Activated naive CD4-positive, alpha-beta T cell treated with anti-CD3 and anti-CD28 coated beads for 36 hours (primary cell): ENCODE measurements at regions of chr6 and their contacts with region 1.

Region 1: DNA sequence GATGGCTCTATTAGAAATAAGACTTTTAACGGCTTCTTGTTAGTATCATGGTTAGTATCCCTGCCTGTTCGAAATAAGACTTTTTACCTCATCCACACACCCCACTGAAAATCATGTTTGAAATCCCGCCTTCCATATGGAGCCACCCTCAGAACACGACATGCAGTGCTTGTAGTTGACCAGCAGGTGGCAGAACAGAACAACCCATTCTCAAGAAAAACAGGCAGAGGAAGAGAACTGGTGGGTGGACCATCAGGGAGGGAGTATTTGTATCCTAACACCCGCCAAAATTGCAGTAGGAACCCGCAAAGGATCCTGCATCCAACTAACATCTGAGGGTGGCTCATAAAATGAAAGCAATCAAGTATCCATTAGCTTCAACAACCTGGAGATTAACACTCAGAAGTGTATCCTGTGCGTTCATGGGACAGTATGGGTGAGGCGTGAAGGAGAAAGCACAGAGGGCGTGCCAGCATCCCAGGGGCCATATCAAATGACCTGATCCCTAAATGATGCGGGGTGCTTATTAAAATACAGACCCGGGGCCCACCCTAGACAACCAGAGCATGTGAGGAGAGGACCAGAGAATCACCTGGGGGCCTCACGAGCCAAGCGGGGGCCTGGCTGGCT is 89.6 kb upstream of the NHSL1 start:
- DNase-seq: peak; percentile 73
- H3K4me3 Mint-ChIP-seq: no peak overlapping the region
- H3K27ac Mint-ChIP-seq: no peak overlapping the region
- H3K4me1 Mint-ChIP-seq: peaks cover 29% of the 10 kb centered on the region
- H3K27me3 Mint-ChIP-seq: no peaks in the 10 kb centered on the region

Region 2: DNA sequence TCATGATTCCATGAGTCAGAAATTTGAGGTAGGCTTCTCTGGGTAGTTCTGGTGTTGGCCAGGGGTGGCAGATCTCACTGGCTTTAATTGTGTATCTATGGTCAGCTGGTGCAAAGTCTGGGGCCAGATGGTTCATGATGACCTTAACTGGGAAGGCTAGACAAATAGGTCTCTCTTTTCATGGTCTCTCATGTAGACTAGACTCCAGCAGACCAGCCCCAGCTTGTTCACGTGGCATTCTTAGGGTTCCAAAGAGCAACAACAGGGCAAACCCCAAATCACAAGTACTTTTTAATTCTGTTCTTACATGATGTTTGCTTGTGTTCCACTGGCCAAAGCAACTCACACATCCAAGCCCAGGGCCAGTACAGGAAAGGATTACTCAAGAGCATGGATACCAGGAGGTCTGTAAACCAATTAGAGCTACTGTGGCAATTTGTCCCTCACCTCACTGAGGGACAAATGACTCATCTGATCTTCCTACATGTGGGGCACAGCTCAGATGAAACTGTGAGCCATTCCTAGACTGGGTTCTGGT is 291.1 kb before region 1 on chr6:
- CTCF ChIA-PET with region 1: no interaction called
- intact Hi-C with region 1: no loop called
- DNase-seq: peak; percentile 8
- H3K4me3 Mint-ChIP-seq: no peak overlapping the region
- H3K27ac Mint-ChIP-seq: no peak overlapping the region
- H3K4me1 Mint-ChIP-seq: peaks cover 6% of the 10 kb centered on the region
- H3K27me3 Mint-ChIP-seq: peaks cover 6% of the 10 kb centered on the region

Region 3: GRCh38 chr6:138403801-138404661 is 184.9 kb before region 1 on chr6 and contains the start of gene HEBP2:
- CTCF ChIA-PET with region 1: interaction called, 3 read pairs
- intact Hi-C with region 1: loop called (anchors 1 kb)
- DNase-seq: peak; percentile 98
- H3K4me3 Mint-ChIP-seq: peak within 1 kb of the TSS; percentile 81
- H3K27ac Mint-ChIP-seq: peak within 1 kb of the TSS; percentile 77
- H3K4me1 Mint-ChIP-seq: peaks cover 15% of the 10 kb centered on the region
- H3K27me3 Mint-ChIP-seq: no peaks in the 10 kb centered on the region
- total RNA-seq, gene HEBP2: 48.5 to 50.8 TPM

Region 4: GRCh38 chr6:138455746-138456400 is 133.0 kb before region 1 on chr6:
- CTCF ChIA-PET with region 1: no interaction called
- intact Hi-C with region 1: loop called (anchors 1 kb)
- DNase-seq: peak; percentile 16
- H3K4me3 Mint-ChIP-seq: peak overlapping the region; percentile 9
- H3K27ac Mint-ChIP-seq: peak overlapping the region; percentile 62
- H3K4me1 Mint-ChIP-seq: peaks cover 28% of the 10 kb centered on the region
- H3K27me3 Mint-ChIP-seq: no peaks in the 10 kb centered on the region

Region 5: GRCh38 chr6:138692058-138692977 is 103.4 kb after region 1 on chr6:
- CTCF ChIA-PET with region 1: interaction called, 9 read pairs
- intact Hi-C with region 1: loop called (anchors 1 kb)
- DNase-seq: peak; percentile 50
- H3K4me3 Mint-ChIP-seq: peak overlapping the region; percentile 79
- H3K27ac Mint-ChIP-seq: no peak overlapping the region
- H3K4me1 Mint-ChIP-seq: peaks cover 5% of the 10 kb centered on the region
- H3K27me3 Mint-ChIP-seq: peaks cover 32% of the 10 kb centered on the region

Region 6: GRCh38 chr6:138869398-138869797 is 280.5 kb after region 1 on chr6:
- CTCF ChIA-PET with region 1: no interaction called
- intact Hi-C with region 1: loop called (anchors 2 kb)
- DNase-seq: no peak
- H3K4me3 Mint-ChIP-seq: no peak overlapping the region
- H3K27ac Mint-ChIP-seq: no peak overlapping the region
- H3K4me1 Mint-ChIP-seq: peaks cover 14% of the 10 kb centered on the region
- H3K27me3 Mint-ChIP-seq: peaks cover 2% of the 10 kb centered on the region

Region 7: GRCh38 chr6:139099984-139100383 is 511.1 kb after region 1 on chr6:
- CTCF ChIA-PET with region 1: no interaction called
- intact Hi-C with region 1: loop called (anchors 1 kb)
- DNase-seq: peak; percentile 63
- H3K4me3 Mint-ChIP-seq: no peak overlapping the region
- H3K27ac Mint-ChIP-seq: peak overlapping the region; percentile 66
- H3K4me1 Mint-ChIP-seq: peaks cover 26% of the 10 kb centered on the region
- H3K27me3 Mint-ChIP-seq: no peaks in the 10 kb centered on the region

Region 8: GRCh38 chr6:139364302-139364981 is 775.5 kb after region 1 on chr6:
- CTCF ChIA-PET with region 1: interaction called, 4 read pairs
- intact Hi-C with region 1: loop called (anchors 1 kb)
- DNase-seq: no peak
- H3K4me3 Mint-ChIP-seq: no peak overlapping the region
- H3K27ac Mint-ChIP-seq: no peak overlapping the region
- H3K4me1 Mint-ChIP-seq: peaks cover 26% of the 10 kb centered on the region
- H3K27me3 Mint-ChIP-seq: no peaks in the 10 kb centered on the region